ENCODE measurements at regions of chr3 and their contacts with region 1.

Region 1: GRCh38 chr3:33658991-33659848 is 58.8 kb downstream of the CLASP2 start:
- DNase-seq: peak; percentile 66 to 77
- ATAC-seq: peak; percentile 89 to 93
- H3K4me3 ChIP-seq: peak overlapping the region; percentile 50 to 64 (median 58)
- H3K27ac ChIP-seq: peak overlapping the region; percentile 82 to 90 (median 86)
- H3K4me1 ChIP-seq: peaks cover 38 to 54% of the 10 kb centered on the region in 2 donors
- H3K27me3 ChIP-seq: no peaks in the 10 kb centered on the region
- CTCF ChIP-seq: peak in 1 of 5 experiments; percentile 25
- POLR2A ChIP-seq: peak in 1 of 2 donors; percentile 45

Region 2: GRCh38 chr3:33096093-33096868 is 562.9 kb before region 1 on chr3:
- in situ Hi-C with region 1: no loop called
- intact Hi-C with region 1: loop called (anchors 10 kb)
- DNase-seq: peak in 1 of 2 donors; percentile 25
- ATAC-seq: peak; percentile 51 to 59
- H3K4me3 ChIP-seq: peak overlapping the region; percentile 72 to 100 (median 94)
- H3K27ac ChIP-seq: peak overlapping the region; percentile 81 to 99 (median 97)
- H3K4me1 ChIP-seq: peaks cover 12 to 33% of the 10 kb centered on the region in 2 donors
- H3K27me3 ChIP-seq: no peaks in the 10 kb centered on the region
- CTCF ChIP-seq: no peak
- POLR2A ChIP-seq: no peak

Region 3: DNA sequence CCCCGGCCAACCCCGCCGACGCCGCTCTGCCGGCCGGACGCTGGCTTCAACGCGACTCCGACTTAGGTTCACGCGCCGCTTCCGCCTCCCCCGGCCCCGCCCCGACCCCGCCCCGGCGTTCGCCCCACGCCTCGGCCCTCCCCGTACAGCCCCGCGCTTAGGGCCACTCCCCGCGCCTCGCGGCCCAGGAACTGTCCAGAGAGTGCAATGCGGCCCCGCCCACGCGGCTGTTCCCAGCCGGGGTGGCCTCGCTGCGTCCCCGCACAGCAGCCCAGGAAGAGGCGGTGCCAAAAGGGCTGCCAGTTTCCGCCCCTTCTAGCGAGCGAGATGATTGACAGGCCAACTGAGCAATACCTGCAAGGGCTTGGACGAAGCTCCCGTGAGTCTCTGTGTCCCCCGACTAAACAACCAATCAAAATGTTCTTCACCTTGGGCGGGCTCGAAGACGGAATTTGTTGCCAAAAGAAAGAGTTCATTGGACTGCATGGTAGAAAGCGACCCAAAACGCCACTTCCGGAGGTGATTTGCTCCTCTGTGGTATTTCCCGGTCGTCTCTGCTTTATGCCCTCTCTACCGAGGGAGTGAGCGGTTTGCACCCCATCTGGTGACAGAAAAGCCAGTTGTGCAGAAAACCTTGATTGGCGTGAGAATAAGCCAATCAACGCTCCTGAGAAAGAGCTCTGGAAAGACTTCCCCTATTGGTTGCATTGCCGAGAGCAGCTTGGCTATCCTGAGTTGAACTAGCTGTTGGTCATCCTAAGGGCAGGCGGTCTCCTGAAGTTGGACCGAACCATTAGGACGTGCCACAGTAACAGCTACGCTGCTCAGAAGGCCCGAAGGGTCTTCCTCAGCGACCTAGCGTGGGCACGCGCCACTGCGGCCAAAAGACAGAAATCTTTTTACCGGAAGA is 218.6 kb before region 1 on chr3 and contains the start of gene UBP1:
- in situ Hi-C with region 1: no loop called
- intact Hi-C with region 1: loop called (anchors 5 kb)
- DNase-seq: peak; percentile 99 to 100
- ATAC-seq: peak; percentile 90 to 93
- H3K4me3 ChIP-seq: peak within 1 kb of the TSS; percentile 70 to 91 (median 80)
- H3K27ac ChIP-seq: peak within 1 kb of the TSS; percentile 92 to 95 (median 94)
- H3K4me1 ChIP-seq: peaks cover 36 to 39% of the 10 kb centered on the region in 2 donors
- H3K27me3 ChIP-seq: no peaks in the 10 kb centered on the region
- CTCF ChIP-seq: peak in 1 of 5 experiments; percentile 11
- POLR2A ChIP-seq: peak; percentile 62 to 83
- total RNA-seq, gene UBP1: 19.1 to 28.9 (median 24.2) TPM

Region 4: DNA sequence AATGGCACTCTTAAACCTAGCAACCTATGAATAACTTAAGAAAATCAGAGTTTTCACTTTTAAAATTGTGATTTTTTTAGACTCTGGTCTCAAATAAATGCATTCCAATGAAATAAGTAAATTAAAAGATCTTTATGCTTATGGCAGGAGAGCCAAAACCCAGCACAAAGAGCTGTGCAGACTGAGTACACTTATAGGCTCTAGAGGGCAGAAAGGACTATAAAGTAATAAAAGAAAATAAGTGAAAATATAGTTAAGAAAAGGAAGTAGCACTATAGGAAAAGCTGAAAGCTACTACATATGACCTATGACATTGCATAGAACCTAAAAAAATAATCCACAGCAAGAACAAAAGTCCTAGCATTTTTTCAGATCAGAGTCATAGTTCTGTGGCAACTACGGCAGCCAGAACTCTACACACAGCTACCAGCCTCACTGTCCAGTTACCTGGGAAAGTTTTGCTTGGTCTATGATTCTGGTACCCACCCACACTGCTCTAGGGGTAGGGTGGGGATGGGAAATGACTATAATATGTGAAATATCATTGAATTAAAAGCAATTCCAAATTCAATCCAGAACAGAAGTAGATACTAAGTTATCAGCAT is 28.3 kb after region 1 on chr3:
- in situ Hi-C with region 1: no loop called
- intact Hi-C with region 1: no loop called
- DNase-seq: no peak
- ATAC-seq: no peak
- H3K4me3 ChIP-seq: no peak overlapping the region
- H3K27ac ChIP-seq: no peak overlapping the region
- H3K4me1 ChIP-seq: no peaks in the 10 kb centered on the region
- H3K27me3 ChIP-seq: no peaks in the 10 kb centered on the region
- CTCF ChIP-seq: no peak
- POLR2A ChIP-seq: no peak

Region 5: GRCh38 chr3:33798411-33799201 is 139.4 kb after region 1 on chr3 and contains the start of gene PDCD6IP:
- in situ Hi-C with region 1: no loop called
- intact Hi-C with region 1: loop called (anchors 5 kb)
- DNase-seq: peak; percentile 90 to 92
- ATAC-seq: peak; percentile 96
- H3K4me3 ChIP-seq: peak within 1 kb of the TSS; percentile 93 to 100 (median 95)
- H3K27ac ChIP-seq: peak within 1 kb of the TSS; percentile 92 to 98 (median 98)
- H3K4me1 ChIP-seq: peaks cover 32 to 46% of the 10 kb centered on the region in 2 donors
- H3K27me3 ChIP-seq: no peaks in the 10 kb centered on the region
- CTCF ChIP-seq: peak in 4 of 5 experiments; percentile 9 to 35 (median 26)
- POLR2A ChIP-seq: peak; percentile 89 to 93
- total RNA-seq, gene PDCD6IP: 93.9 to 181 (median 127) TPM

Region 6: DNA sequence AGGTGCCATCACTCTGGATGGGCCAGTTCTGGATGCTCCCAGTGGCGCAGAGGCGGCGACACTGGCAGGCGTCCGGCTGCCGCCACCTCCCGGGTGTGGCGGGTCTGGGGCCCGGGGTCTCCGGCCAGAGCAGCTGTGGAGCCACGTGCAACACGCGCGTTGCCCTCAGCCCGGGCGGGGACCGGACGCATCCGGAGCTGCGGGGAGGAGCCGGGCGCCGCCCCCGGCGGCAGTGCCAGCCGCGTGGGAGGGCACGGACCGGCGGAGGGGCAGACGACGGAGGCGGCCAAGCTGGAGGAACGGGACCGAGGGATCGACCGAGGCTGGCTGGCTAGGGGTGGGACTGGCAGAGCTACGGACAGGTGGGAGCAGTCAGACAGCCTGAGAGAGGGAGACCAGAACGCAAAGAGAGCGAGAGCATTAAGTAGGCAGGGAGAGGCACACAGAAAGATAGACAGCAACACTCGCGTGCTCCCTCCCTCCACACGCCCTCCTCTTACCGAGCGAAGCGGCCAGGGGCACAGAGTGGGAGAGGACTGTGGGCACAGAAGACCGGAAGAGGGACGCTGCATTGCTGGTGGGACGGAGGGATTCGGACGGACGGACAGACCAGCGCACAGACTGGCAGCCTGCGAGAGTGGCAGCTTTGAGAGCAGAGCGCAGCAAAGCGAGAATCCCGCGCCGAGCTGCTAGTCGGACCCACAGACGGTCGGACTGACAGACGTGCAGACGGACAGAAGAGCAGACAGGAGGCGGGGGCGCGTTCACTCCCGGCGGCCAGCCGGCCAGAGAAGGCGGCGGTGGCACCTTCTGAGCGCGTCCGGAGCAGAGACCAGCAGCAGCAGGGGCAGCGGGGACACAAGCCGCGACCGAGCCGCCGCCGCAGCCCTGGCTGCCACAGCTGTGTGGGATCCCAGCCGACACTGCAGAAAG is 1980.3 kb after region 1 on chr3 and contains the start of gene ARPP21:
- in situ Hi-C with region 1: no loop called
- intact Hi-C with region 1: loop called (anchors 5 kb)
- DNase-seq: peak; percentile 58 to 68
- ATAC-seq: peak; percentile 64 to 71
- H3K4me3 ChIP-seq: peak within 1 kb of the TSS; percentile 67 to 77 (median 74)
- H3K27ac ChIP-seq: peak within 1 kb of the TSS; percentile 88 to 94 (median 92)
- H3K4me1 ChIP-seq: no peaks in the 10 kb centered on the region
- H3K27me3 ChIP-seq: no peaks in the 10 kb centered on the region
- CTCF ChIP-seq: no peak
- POLR2A ChIP-seq: peak; percentile 59 to 77
- total RNA-seq, gene ARPP21: 58.7 to 93.8 (median 67.5) TPM